Panc1 (cell line): ENCODE measurements at regions of chr6 and their contacts with region 1.

Region 1: GRCh38 chr6:56463443-56463842 is 179.2 kb downstream of the DST start:
- DNase-seq: no peak
- ATAC-seq: no peak
- H3K4me3 ChIP-seq: no peak overlapping the region
- H3K27ac ChIP-seq: no peak overlapping the region
- H3K4me1 ChIP-seq: no peaks in the 10 kb centered on the region
- H3K27me3 ChIP-seq: no peaks in the 10 kb centered on the region
- CTCF ChIP-seq: no peak

Region 2: DNA sequence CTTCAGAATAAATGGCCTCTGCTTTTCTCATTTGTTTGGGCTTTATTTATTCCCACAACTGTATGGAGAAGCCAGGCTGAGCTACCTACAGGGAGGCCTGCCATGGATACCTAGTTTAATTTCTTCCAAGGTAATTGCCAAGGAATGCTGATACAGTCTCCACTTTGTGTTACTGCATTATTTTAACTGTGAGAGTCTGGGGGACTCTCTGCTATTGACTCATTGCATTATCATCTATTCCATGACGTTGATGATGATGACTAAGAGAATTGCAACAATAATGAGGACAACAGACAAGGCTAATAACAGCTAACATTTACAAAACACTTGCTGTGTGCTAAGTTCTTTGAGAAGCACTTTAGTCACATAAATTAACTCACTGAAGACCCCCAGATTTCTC is 127.7 kb before region 1 on chr6:
- CTCF ChIA-PET with region 1: no interaction called
- POLR2A ChIA-PET with region 1: interaction called, 14 read pairs
- in situ Hi-C with region 1: no loop called
- intact Hi-C with region 1: no loop called
- DNase-seq: peak; percentile 58
- ATAC-seq: no peak
- H3K4me3 ChIP-seq: no peak overlapping the region
- H3K27ac ChIP-seq: no peak overlapping the region
- H3K4me1 ChIP-seq: no peaks in the 10 kb centered on the region
- H3K27me3 ChIP-seq: peaks cover 4% of the 10 kb centered on the region; the same call in 1 of the 2 replicates
- CTCF ChIP-seq: no peak

Region 3: DNA sequence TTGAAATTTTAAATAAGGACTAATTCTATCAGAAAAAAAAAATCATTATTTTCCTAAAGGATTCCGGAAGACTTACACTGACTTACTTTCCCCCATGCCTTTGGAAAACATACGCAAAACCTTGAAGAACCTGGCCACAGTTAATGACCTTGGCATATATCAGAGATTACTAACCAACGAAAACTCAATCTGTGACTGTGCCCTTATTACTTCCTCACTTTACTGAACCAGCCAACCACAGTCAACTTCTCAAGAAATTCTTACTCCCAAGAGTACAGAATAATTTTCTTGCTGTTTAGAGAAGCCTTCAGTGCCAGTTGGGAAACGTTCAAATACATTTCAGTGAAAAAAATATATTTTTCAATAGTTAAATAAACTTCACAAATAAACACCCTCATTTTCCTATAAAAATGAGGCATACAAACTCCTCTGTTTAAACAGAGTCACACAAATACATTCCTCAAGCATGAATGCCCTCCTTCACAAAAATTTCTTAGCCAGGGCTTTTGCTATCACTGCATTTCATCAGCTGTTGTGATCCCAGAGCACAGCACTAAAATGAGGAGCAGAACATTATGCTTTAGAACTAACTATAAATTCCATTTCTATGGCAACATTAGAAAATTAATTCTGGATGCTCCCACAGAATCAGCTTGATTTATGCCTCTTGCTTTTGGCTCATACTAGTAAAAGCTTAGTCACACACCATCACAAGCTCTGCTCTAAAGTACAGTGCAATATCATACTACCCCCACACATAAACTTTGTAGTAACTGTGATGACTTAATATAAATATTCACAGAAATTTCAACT is 61.7 kb after region 1 on chr6:
- CTCF ChIA-PET with region 1: no interaction called
- POLR2A ChIA-PET with region 1: no interaction called
- in situ Hi-C with region 1: no loop called
- intact Hi-C with region 1: no loop called
- DNase-seq: peak; percentile 84
- ATAC-seq: peak; percentile 86
- H3K4me3 ChIP-seq: no peak overlapping the region
- H3K27ac ChIP-seq: peak overlapping the region; percentile 70
- H3K4me1 ChIP-seq: peaks cover 15% of the 10 kb centered on the region
- H3K27me3 ChIP-seq: no peaks in the 10 kb centered on the region
- CTCF ChIP-seq: no peak

Region 4: DNA sequence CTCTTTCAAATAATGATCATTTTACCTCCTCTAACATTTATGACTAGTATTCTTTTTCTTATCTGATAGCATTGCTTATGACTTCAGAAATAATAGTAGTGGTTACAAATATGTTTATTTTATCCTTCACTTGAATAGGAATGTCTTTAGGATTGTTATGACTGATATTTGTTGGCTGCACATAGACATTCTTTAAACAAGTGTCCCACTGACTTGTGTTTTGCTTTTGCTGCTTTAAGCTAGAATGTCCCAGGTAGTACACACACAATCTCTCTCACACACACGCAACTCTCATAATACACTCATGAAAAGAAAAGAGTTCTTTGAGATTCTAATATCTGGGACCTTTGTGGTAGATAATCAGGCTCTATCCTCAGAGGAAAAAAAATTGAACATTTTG is 604.6 kb after region 1 on chr6:
- CTCF ChIA-PET with region 1: no interaction called
- POLR2A ChIA-PET with region 1: no interaction called
- in situ Hi-C with region 1: no loop called
- intact Hi-C with region 1: no loop called
- DNase-seq: no peak
- ATAC-seq: no peak
- H3K4me3 ChIP-seq: no peak overlapping the region
- H3K27ac ChIP-seq: no peak overlapping the region
- H3K4me1 ChIP-seq: no peaks in the 10 kb centered on the region
- H3K27me3 ChIP-seq: no peaks in the 10 kb centered on the region
- CTCF ChIP-seq: no peak